Activated CD4-positive, alpha-beta memory T cell treated with anti-CD3 and anti-CD28 coated beads, Interleukin-2, amount 10 ng/mL, durations not matched to agents 7 days and 5 days (primary cell): ENCODE measurements at regions of chr18 and their contacts with region 1.

Region 1: DNA sequence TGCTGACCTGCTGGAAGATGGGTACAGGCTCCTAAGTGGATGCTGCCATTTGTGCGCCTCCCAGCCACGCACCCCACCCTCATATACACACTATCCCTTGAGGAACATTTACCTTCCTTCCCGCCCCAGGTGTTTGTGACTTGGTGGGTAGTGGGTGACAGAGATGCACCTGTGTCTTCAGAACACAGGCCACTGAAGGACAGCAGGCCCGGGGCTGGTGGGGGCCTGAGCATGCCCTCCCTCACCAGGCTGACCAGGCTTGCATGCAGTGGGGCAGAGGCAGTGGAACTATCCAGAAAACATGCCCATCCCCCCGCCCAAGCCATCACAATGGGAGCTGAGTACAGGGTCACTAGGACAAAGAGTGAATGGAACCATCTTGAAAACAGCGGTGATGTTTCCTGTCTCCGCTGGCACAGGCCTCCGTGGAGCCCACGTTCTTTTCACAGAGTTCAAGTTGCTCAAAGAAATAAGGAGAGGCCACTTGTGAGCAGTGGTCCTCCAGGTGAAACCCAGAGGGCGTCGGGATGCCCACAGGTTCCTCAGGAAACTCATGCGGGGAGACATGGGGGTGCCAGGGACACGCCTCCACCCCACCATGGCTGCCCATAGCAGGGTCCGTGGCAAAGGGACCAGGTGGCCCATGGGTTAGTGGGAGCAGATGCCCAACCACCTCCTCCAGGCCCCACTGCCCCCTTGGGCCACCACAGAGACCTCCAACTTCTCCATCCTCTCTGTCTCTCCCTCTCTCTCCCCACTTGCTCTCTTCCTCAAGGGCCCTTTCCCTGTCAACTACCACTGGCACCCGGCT is 90.9 kb downstream of the MALT1 start:
- DNase-seq: no peak
- H3K4me3 Mint-ChIP-seq: no peak overlapping the region
- H3K27ac Mint-ChIP-seq: no peak overlapping the region
- H3K4me1 Mint-ChIP-seq: peaks cover 15% of the 10 kb centered on the region
- H3K27me3 Mint-ChIP-seq: peaks cover 41% of the 10 kb centered on the region

Region 2: GRCh38 chr18:58496937-58497336 is 265.2 kb before region 1 on chr18:
- CTCF ChIA-PET with region 1: interaction called, 16 read pairs
- POLR2A ChIA-PET with region 1: no interaction called
- DNase-seq: no peak
- H3K4me3 Mint-ChIP-seq: no peak overlapping the region
- H3K27ac Mint-ChIP-seq: no peak overlapping the region
- H3K4me1 Mint-ChIP-seq: peaks cover 12% of the 10 kb centered on the region
- H3K27me3 Mint-ChIP-seq: peaks cover 31% of the 10 kb centered on the region

Region 3: GRCh38 chr18:58863539-58864145 is 101.5 kb after region 1 on chr18:
- CTCF ChIA-PET with region 1: no interaction called
- POLR2A ChIA-PET with region 1: no interaction called
- DNase-seq: peak; percentile 32
- H3K4me3 Mint-ChIP-seq: peak overlapping the region; percentile 33
- H3K27ac Mint-ChIP-seq: no peak overlapping the region
- H3K4me1 Mint-ChIP-seq: peaks cover 20% of the 10 kb centered on the region
- H3K27me3 Mint-ChIP-seq: peaks cover 59% of the 10 kb centered on the region